ENCODE measurements at regions of chr20 and their contacts with region 1.

Region 1: DNA sequence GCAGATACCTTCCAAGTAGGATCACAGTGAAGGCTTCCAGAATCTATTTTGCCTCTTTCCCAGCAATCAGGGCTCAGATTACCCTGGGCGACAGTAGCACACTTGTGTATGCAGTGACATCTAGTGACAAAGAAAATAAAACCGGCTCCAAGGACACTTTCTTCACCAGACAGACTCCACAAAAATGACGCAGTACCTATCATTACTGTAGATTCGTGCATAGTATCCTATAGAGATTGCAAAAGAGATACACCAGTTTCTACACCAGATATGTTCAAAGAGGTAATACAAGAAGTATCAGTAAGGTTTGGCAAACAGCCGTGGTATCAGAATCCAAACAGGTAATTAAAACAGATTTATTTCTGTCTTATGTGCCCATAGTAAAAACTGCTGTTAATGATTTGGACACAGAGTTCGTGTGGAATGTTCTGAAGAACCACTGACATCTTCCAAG is 600.4 kb upstream of the JAG1 start:
- DNase-seq: peak; percentile 74
- H3K4me3 ChIP-seq: no peak overlapping the region
- H3K27ac ChIP-seq: no peak overlapping the region
- H3K4me1 ChIP-seq: no peaks in the 10 kb centered on the region
- H3K27me3 ChIP-seq: no peaks in the 10 kb centered on the region

Region 2: GRCh38 chr20:10469599-10469998 is 804.6 kb before region 1 on chr20:
- in situ Hi-C with region 1: loop called (anchors 25 kb)
- DNase-seq: peak; percentile 84
- H3K4me3 ChIP-seq: no peak overlapping the region
- H3K27ac ChIP-seq: no peak overlapping the region
- H3K4me1 ChIP-seq: peaks cover 13% of the 10 kb centered on the region
- H3K27me3 ChIP-seq: no peaks in the 10 kb centered on the region

Region 3: DNA sequence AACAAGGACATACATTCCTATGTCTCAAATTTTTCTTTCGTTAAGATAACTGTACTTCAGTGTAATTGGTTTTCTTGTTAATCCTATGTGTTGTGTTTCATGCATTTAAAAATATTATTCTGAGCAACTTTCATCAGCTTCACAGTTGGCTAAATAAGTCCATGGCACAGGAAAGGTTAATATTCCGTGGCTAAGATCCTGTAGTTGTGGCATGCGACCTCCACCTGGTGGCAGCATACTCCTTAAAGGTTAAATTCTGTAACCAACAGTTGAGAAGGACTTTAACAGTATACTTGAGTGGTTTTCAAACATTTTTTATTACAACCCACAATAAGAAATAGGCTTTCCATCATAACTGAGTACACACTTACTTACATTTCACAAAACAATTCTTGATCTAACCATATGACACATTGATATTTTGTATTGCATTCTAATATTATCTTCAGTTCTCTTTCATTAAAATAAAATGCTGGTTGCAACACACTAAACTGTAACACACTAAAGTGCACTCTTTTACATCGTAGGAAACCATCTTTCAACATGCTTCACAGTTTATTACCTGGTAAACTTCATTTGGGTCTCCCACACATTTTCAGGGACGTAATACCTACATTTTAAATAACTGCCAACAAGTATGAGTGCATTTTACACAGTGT is 720.7 kb before region 1 on chr20:
- in situ Hi-C with region 1: loop called (anchors 25 kb)
- DNase-seq: peak; percentile 85
- H3K4me3 ChIP-seq: no peak overlapping the region
- H3K27ac ChIP-seq: no peak overlapping the region
- H3K4me1 ChIP-seq: peaks cover 14% of the 10 kb centered on the region
- H3K27me3 ChIP-seq: no peaks in the 10 kb centered on the region

Region 4: DNA sequence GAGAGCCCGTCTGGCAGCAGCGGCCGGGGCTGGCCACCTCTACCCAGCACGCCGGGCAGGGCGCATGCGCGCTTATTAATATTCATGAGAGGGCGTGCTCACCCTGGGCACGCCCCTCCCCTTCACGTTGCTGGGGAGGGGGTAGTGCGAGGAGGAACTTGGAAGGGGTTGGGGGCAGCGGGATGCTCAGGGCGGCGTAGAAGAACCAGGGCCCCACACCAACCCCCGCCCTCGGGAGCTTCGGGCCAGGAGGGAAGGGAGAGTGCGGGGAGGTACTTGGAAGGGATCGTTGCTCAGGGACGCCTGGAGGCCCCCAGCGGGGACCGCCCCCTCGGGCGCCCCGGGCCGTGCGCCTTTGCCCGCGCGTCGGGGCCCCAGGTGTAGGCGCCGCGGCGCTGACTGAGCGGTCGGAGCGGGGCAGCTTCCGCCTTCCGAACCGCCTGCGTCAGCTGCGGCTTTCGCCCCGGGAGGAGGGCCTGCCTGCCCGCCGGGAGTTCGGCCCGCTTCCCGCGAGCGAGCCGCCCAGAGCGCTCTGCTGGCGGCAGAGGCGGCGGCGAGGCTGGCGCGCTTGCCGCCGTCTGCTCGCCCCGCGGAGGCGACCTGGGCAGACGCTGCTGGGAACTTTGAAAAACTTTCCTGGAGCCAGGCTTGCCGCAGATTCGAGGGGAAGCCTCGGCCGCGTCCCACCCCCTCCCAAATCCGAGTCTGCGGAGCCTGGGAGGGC is 600.0 kb before region 1 on chr20 and contains the start of gene JAG1:
- in situ Hi-C with region 1: loop called (anchors 10 kb)
- DNase-seq: peak; percentile 96
- H3K4me3 ChIP-seq: peak within 1 kb of the TSS; percentile 82
- H3K27ac ChIP-seq: peak within 1 kb of the TSS; percentile 86
- H3K4me1 ChIP-seq: peaks cover 9% of the 10 kb centered on the region; the same call in 1 of the 2 replicates
- H3K27me3 ChIP-seq: no peaks in the 10 kb centered on the region
- total RNA-seq, gene JAG1: 4.8 and 8.4 TPM in 2 replicates

Region 5: GRCh38 chr20:11917663-11918062 is 643.5 kb after region 1 on chr20 and contains the start of gene BTBD3:
- in situ Hi-C with region 1: no loop called
- DNase-seq: peak; percentile 64
- H3K4me3 ChIP-seq: peak within 1 kb of the TSS; percentile 37; the same call in 1 of the 2 replicates
- H3K27ac ChIP-seq: no peak within 1 kb of the TSS
- H3K4me1 ChIP-seq: peaks cover 14% of the 10 kb centered on the region; the same call in 1 of the 2 replicates
- H3K27me3 ChIP-seq: no peaks in the 10 kb centered on the region
- total RNA-seq, gene BTBD3: 30.5 and 33.8 TPM in 2 replicates